ENCODE measurements at regions of chr6 and their contacts with region 1.

Region 1: DNA sequence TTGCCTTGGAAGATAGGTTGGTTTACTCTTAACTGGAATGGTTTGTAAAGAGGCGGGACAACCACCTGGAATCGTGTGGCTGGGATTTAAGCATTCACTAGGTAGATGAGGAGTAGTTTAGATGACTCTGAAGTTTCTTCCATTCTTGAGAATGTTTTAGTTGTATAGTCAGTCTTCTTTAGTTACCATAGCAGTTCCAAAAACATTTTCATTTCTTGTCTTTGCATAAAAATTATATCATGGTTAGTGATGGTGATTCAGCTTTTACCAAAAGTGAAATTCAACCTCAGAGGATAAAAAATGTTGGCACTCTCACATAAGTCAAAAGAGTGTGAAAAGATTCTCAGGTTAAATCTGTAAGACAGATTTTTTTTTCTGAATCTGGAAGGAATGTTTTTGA is 70.3 kb downstream of the SMAP1 start:
- DNase-seq: no peak
- ATAC-seq: peak; percentile 45
- H3K4me3 Mint-ChIP-seq: no peak overlapping the region
- H3K27ac Mint-ChIP-seq: no peak overlapping the region
- H3K4me1 Mint-ChIP-seq: peaks cover 35% of the 10 kb centered on the region
- H3K27me3 Mint-ChIP-seq: no peaks in the 10 kb centered on the region

Region 2: GRCh38 chr6:70725817-70726415 is 12.1 kb before region 1 on chr6:
- CTCF ChIA-PET with region 1: interaction called, 12 read pairs
- POLR2A ChIA-PET with region 1: no interaction called
- intact Hi-C with region 1: no loop called
- DNase-seq: no peak
- ATAC-seq: no peak
- H3K4me3 Mint-ChIP-seq: no peak overlapping the region
- H3K27ac Mint-ChIP-seq: no peak overlapping the region
- H3K4me1 Mint-ChIP-seq: peaks cover 40% of the 10 kb centered on the region
- H3K27me3 Mint-ChIP-seq: no peaks in the 10 kb centered on the region